Activated naive CD4-positive, alpha-beta T cell treated with anti-CD3 and anti-CD28 coated beads, Interleukin-2, amount 10 ng/mL, durations not matched to agents 7 days and 5 days (primary cell): ENCODE measurements at regions of chr10 and their contacts with region 1.

Region 1: DNA sequence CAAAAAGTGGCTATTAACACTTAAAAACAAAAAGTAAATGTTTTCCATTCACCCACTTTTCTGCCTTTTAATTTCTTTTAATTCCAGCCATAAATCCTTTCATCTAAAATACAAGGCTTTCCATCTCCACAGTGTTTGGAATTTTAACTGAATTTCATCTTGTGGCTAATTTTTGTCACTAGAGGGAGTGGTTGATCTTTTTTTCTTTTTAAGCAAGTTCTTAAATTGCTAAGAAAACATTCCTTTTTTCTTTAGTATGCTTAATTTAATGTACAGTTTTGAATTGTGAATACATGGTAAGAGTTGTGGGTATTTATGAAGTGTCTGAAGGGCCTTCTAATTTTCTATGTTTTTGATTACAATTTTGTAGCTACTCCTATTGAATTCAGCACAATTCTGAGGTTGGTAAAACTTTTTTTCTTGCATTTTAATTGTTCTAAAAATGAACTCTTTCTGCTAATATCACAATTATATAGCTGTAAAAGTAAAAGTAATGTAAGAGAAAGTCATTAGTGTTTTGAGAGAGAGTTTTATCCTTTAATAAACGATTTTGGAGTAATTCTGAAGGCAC is 54.9 kb upstream of the ANK3 start:
- DNase-seq: no peak
- H3K4me3 Mint-ChIP-seq: no peak overlapping the region
- H3K27ac Mint-ChIP-seq: no peak overlapping the region
- H3K4me1 Mint-ChIP-seq: peaks cover 12% of the 10 kb centered on the region
- H3K27me3 Mint-ChIP-seq: no peaks in the 10 kb centered on the region

Region 2: GRCh38 chr10:60646966-60647796 is 202.6 kb after region 1 on chr10:
- CTCF ChIA-PET with region 1: interaction called, 24 read pairs
- DNase-seq: peak; percentile 42
- H3K4me3 Mint-ChIP-seq: no peak overlapping the region
- H3K27ac Mint-ChIP-seq: no peak overlapping the region
- H3K4me1 Mint-ChIP-seq: peaks cover 4% of the 10 kb centered on the region
- H3K27me3 Mint-ChIP-seq: no peaks in the 10 kb centered on the region

Region 3: DNA sequence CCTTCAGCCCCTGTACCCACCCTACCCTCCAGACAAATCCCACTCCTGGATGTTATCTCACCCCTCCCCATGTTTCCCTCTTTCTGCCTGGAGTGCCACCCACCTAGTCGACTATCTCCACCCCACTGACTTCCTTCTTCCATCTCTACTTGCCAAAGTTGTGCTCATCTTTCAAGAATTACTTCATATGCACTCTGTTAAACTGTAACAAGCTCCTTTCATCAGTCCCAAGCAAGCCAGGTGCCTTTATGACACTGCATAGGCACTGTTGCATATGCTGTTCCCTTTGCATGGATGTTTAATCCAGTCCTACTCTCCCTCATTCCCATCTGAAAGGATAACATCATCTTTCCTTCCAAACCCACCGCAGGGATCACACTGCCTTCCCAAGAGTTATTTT is 324.8 kb after region 1 on chr10:
- CTCF ChIA-PET with region 1: interaction called, 30 read pairs
- DNase-seq: no peak
- H3K4me3 Mint-ChIP-seq: no peak overlapping the region
- H3K27ac Mint-ChIP-seq: no peak overlapping the region
- H3K4me1 Mint-ChIP-seq: peaks cover 12% of the 10 kb centered on the region
- H3K27me3 Mint-ChIP-seq: peaks cover 10% of the 10 kb centered on the region